HepG2 (cell line): ENCODE measurements at regions of chr2 and their contacts with region 1.

Region 1: GRCh38 chr2:102046135-102046986 is 54.6 kb downstream of the IL1R2 start:
- DNase-seq: peak; percentile 98
- ATAC-seq: peak; percentile 98
- H3K4me3 ChIP-seq: peak overlapping the region in 1 of 3 experiments; percentile 2; a peak in 1 of 6 replicates
- H3K27ac ChIP-seq: peak overlapping the region; percentile 83
- H3K4me1 ChIP-seq: peaks cover 92% of the 10 kb centered on the region
- H3K27me3 ChIP-seq: no peaks in the 10 kb centered on the region
- CTCF ChIP-seq: peak; percentile 50
- EP300 ChIP-seq: peak in 1 of 2 experiments; percentile 95; a peak in 2 of 4 replicates
- POLR2A ChIP-seq: peak; percentile 42 to 74; a peak in 2 of 4 replicates
- RAD21 ChIP-seq: peak; percentile 65; the same call in 1 of the 2 replicates

Region 2: GRCh38 chr2:102057502-102058292 is 11.3 kb after region 1 on chr2:
- CTCF ChIA-PET with region 1: no interaction called
- POLR2A ChIA-PET with region 1: interaction called, 7 read pairs
- in situ Hi-C with region 1: no loop called
- intact Hi-C with region 1: loop called (anchors 1 kb)
- DNase-seq: peak; percentile 98
- ATAC-seq: peak; percentile 88
- H3K4me3 ChIP-seq: peak overlapping the region in 1 of 3 experiments; percentile 39; a peak in 1 of 6 replicates
- H3K27ac ChIP-seq: peak overlapping the region; percentile 89
- H3K4me1 ChIP-seq: peaks cover 89% of the 10 kb centered on the region
- H3K27me3 ChIP-seq: no peaks in the 10 kb centered on the region
- CTCF ChIP-seq: no peak
- EP300 ChIP-seq: peak; percentile 76 to 100; a peak in 3 of 4 replicates
- POLR2A ChIP-seq: no peak
- RAD21 ChIP-seq: peak; percentile 14; the same call in 1 of the 2 replicates

Region 3: DNA sequence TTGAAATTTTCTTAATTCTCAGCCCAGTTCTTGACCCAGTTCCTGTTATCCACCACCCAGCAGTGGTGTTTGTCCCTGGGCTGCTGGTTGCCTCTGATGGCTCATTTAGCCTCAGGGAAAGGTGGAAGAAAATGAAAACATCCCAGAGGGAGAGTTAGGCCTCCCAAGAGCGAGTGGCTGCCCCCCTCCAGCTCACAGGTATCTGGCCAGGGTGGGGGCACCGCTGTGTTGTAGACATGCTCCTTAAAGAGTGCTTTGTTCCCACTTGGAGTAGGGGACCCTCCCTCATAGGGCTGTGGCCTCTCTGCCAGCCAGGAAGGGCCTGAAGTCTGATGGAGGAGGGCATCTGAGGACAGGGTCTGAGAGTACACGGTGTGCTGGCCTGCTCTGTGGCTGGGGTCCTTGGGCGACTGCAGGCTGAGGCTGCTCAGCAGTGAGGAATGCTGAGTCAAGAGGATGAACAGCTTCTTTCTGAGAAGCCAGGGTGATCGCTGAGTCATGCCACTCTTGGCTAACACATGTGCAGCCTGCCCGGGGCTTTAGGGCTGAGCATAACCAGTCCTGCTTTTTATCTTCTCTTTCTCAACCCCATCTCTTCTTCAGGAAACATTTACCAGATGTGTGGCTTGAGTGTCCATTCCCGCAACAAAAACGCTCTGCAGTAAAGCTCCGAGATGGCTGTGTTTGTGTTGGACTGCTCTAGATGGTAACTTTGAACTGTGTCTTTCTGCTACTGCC is 17.7 kb after region 1 on chr2:
- CTCF ChIA-PET with region 1: no interaction called
- POLR2A ChIA-PET with region 1: interaction called, 10 read pairs
- in situ Hi-C with region 1: no loop called
- intact Hi-C with region 1: no loop called
- DNase-seq: peak; percentile 88
- ATAC-seq: peak; percentile 84
- H3K4me3 ChIP-seq: peak overlapping the region in 1 of 3 experiments; percentile 7; a peak in 2 of 6 replicates
- H3K27ac ChIP-seq: peak overlapping the region; percentile 71
- H3K4me1 ChIP-seq: peaks cover 82% of the 10 kb centered on the region
- H3K27me3 ChIP-seq: no peaks in the 10 kb centered on the region
- CTCF ChIP-seq: no peak
- EP300 ChIP-seq: peak in 1 of 2 experiments; percentile 67; a peak in 1 of 4 replicates
- POLR2A ChIP-seq: no peak; a peak in 1 of 4 replicates
- RAD21 ChIP-seq: no peak